Caco-2 (cell line): ENCODE measurements at regions of chr12 and their contacts with region 1.

Region 1: DNA sequence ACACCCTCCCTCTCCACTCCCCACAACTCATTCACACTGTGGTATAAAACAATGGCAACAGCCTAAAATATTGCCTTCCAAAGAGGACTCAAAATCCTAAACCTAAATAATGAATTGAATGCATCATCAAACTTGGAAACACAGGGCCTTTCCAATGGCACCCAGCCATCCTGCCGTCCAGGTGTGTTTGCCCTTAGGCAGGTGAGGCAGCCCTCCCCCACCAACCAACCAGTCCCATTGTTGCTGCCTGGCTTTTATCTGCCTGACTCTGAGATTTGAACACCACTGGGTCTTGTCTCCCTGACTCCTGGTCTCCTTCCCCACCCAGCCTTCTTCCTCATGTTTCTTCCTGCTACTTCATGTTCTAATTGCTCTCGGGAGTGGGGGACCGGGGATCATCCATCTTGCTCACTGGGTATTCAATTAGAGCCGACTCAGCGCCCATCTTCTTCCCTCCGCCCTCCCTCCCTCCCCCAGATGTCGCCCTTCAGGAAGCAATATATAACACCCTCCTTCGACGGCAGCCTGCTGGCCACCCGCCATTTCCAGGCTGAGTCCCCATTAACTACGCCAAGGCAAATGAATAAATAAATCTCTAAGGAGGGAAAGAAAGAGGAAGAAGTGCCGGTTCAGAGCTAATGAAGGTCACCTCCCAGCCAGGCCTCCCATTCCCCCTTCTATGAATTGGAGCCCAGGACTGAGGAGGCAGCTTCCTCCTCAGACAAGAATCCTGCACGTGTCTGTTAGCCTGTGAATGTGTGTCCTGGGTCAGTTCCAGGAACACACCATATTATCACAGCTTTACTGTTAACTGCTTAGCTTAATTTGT is 36.3 kb upstream of the NTF3 start:
- DNase-seq: no peak
- H3K4me3 ChIP-seq: no peak overlapping the region
- H3K4me3 Mint-ChIP-seq: no peak overlapping the region
- H3K27ac Mint-ChIP-seq: peak overlapping the region; percentile 14
- H3K4me1 ChIP-seq: peaks cover 23% of the 10 kb centered on the region
- H3K4me1 Mint-ChIP-seq: peaks cover 15% of the 10 kb centered on the region
- H3K27me3 ChIP-seq: no peaks in the 10 kb centered on the region
- H3K27me3 Mint-ChIP-seq: no peaks in the 10 kb centered on the region
- CTCF ChIP-seq: no peak

Region 2: GRCh38 chr12:5309654-5310053 is 86.0 kb before region 1 on chr12:
- CTCF ChIA-PET with region 1: no interaction called
- POLR2A ChIA-PET with region 1: no interaction called
- intact Hi-C with region 1: loop called (anchors 5 kb)
- DNase-seq: no peak
- H3K4me3 ChIP-seq: no peak overlapping the region
- H3K4me3 Mint-ChIP-seq: no peak overlapping the region
- H3K27ac Mint-ChIP-seq: no peak overlapping the region
- H3K4me1 ChIP-seq: peaks cover 22% of the 10 kb centered on the region
- H3K4me1 Mint-ChIP-seq: peaks cover 18% of the 10 kb centered on the region
- H3K27me3 ChIP-seq: no peaks in the 10 kb centered on the region
- H3K27me3 Mint-ChIP-seq: no peaks in the 10 kb centered on the region
- CTCF ChIP-seq: no peak

Region 3: GRCh38 chr12:5348491-5348890 is 47.2 kb before region 1 on chr12:
- CTCF ChIA-PET with region 1: no interaction called
- POLR2A ChIA-PET with region 1: no interaction called
- intact Hi-C with region 1: loop called (anchors 10 kb)
- DNase-seq: peak; percentile 29 to 54
- H3K4me3 ChIP-seq: no peak overlapping the region
- H3K4me3 Mint-ChIP-seq: no peak overlapping the region
- H3K27ac Mint-ChIP-seq: no peak overlapping the region
- H3K4me1 ChIP-seq: peaks cover 18% of the 10 kb centered on the region
- H3K4me1 Mint-ChIP-seq: peaks cover 31% of the 10 kb centered on the region
- H3K27me3 ChIP-seq: no peaks in the 10 kb centered on the region
- H3K27me3 Mint-ChIP-seq: peaks cover 2% of the 10 kb centered on the region
- CTCF ChIP-seq: no peak

Region 4: DNA sequence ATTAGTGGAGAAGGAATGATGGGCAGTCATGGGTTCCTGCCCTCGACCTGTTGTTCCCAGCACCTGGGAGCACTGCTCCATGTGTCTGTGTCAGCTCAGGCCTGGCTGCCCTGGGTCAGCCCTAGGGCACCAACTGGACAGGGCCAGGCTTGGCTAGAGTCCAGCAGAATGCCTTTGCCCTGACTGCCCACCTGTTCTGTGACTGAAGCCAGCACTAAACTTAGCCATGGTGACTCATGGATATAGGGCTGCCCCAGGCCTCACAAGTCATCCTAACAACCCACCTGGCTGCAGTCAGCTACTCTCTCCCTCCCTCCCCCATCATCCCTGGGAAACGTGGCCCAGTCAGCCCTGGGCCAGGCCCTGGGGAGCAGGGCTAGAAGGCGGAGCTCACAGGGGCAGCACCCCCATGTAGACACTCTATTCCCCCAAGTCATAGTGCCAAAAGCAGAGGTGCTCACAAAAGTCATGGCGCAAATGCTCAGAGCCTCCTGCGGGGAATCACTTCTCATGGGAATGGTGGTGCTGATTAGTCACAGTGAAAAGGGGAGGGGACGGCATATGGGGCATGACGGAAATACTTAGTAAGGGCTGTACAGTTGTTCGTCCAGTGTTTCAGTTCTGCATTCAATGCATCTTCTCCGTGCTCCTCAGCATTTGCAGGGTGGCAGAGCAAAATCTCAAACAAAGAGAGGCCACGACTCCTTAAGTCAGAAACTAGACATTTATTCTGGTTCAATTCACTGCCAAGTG is 15.7 kb before region 1 on chr12:
- CTCF ChIA-PET with region 1: no interaction called
- POLR2A ChIA-PET with region 1: no interaction called
- intact Hi-C with region 1: no loop called
- DNase-seq: no peak
- H3K4me3 ChIP-seq: no peak overlapping the region
- H3K4me3 Mint-ChIP-seq: no peak overlapping the region
- H3K27ac Mint-ChIP-seq: no peak overlapping the region
- H3K4me1 ChIP-seq: no peaks in the 10 kb centered on the region
- H3K4me1 Mint-ChIP-seq: no peaks in the 10 kb centered on the region
- H3K27me3 ChIP-seq: no peaks in the 10 kb centered on the region
- H3K27me3 Mint-ChIP-seq: no peaks in the 10 kb centered on the region
- CTCF ChIP-seq: no peak